Testis (tissue), 5 donors: ENCODE measurements at regions of chr20 and their contacts with region 1.

Region 1: GRCh38 chr20:16801919-16802911 is 54.1 kb downstream of the OTOR start:
- DNase-seq: peak; percentile 91
- H3K4me3 ChIP-seq: no peak overlapping the region
- H3K27ac ChIP-seq: no peak overlapping the region
- H3K4me1 ChIP-seq: no peaks in the 10 kb centered on the region
- H3K27me3 ChIP-seq: no peaks in the 10 kb centered on the region
- CTCF ChIP-seq: peak; percentile 51 to 87 (median 85)
- POLR2A ChIP-seq: no peak

Region 2: DNA sequence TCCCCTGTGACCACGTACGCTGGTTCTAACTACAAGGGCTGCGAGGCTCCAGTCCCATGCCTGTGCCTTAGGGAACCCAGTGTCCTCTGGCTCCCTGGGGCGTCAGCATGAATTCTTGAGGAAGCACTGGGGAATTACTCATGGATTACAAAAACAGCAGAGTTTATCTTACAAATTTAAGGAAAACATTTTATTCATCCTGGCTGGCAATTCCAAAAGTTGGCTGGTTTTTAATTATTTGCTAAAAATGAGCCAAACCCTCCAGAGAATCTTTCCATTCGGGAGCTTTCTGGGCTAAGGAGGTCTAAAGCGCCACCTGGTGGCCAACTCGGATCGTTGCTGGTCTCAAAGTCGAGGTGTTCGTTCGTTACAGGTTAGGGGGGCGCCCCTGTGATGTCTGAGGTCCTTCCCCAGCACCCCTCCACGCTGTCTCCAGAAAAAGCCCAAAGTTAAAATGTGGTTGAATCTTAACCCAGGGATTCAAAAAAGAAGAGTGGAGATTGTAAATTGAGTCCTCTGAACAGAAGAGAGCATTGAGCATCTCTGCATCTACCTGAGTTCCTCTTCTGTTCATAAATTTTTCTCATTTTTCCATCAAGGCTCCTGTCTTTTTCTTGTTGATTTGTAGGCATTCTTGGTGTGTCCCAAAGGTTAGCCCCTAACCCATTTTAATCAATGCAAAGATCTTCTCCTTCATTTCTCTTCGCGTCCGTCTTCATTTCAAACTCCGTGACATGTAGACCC is 629.6 kb after region 1 on chr20:
- intact Hi-C with region 1: loop called (anchors 5 kb)
- DNase-seq: peak; percentile 81
- H3K4me3 ChIP-seq: no peak overlapping the region
- H3K27ac ChIP-seq: no peak overlapping the region
- H3K4me1 ChIP-seq: no peaks in the 10 kb centered on the region
- H3K27me3 ChIP-seq: no peaks in the 10 kb centered on the region
- CTCF ChIP-seq: peak; percentile 81 to 97 (median 84)
- POLR2A ChIP-seq: no peak